Common myeloid progenitor, CD34-positive (primary cell): ENCODE measurements at regions of chr7 and their contacts with region 1.

Region 1: GRCh38 chr7:5477723-5478531 is 54.3 kb upstream of the TNRC18 start:
- DNase-seq: peak; percentile 72 to 85 (median 81)
- H3K4me3 ChIP-seq: peak overlapping the region; percentile 17 to 69 (median 61)
- H3K27ac ChIP-seq: peak overlapping the region; percentile 75 to 82
- H3K4me1 ChIP-seq: peaks cover 0 to 48% (median 41%) of the 10 kb centered on the region in 4 experiments
- H3K27me3 ChIP-seq: no peaks in the 10 kb centered on the region

Region 2: DNA sequence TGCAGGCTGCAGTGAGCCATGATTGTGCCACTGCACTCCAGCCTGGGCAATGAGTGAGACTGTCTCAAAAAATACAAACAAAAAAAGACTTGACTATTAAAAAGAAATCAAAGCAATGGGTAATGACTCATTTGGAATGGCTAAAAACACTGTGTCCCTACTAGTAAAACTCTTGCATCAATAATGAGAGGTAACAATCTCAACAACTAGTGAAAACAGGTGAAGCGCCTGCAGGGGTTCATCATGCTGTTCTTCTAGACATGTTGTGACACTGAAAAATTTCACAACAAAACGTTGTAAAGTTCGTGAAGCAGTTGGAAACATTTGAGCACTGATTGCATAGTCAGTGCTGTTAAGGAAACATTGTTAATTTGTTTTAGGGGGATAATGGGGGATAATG is 222.1 kb before region 1 on chr7:
- CTCF ChIA-PET with region 1: no interaction called
- POLR2A ChIA-PET with region 1: no interaction called
- DNase-seq: no peak
- H3K4me3 ChIP-seq: no peak overlapping the region
- H3K27ac ChIP-seq: no peak overlapping the region
- H3K4me1 ChIP-seq: no peaks in the 10 kb centered on the region
- H3K27me3 ChIP-seq: peaks cover 0 to 2% (median 0%) of the 10 kb centered on the region in 5 experiments

Region 3: GRCh38 chr7:5363729-5364128 is 114.2 kb before region 1 on chr7:
- CTCF ChIA-PET with region 1: interaction called, 11 read pairs
- POLR2A ChIA-PET with region 1: no interaction called
- DNase-seq: no peak
- H3K4me3 ChIP-seq: peak overlapping the region in 1 of 7 experiments; percentile 11
- H3K27ac ChIP-seq: peak overlapping the region in 1 of 2 experiments; percentile 34
- H3K4me1 ChIP-seq: peaks cover 0 to 27% (median 22%) of the 10 kb centered on the region in 4 experiments
- H3K27me3 ChIP-seq: no peaks in the 10 kb centered on the region

Region 4: DNA sequence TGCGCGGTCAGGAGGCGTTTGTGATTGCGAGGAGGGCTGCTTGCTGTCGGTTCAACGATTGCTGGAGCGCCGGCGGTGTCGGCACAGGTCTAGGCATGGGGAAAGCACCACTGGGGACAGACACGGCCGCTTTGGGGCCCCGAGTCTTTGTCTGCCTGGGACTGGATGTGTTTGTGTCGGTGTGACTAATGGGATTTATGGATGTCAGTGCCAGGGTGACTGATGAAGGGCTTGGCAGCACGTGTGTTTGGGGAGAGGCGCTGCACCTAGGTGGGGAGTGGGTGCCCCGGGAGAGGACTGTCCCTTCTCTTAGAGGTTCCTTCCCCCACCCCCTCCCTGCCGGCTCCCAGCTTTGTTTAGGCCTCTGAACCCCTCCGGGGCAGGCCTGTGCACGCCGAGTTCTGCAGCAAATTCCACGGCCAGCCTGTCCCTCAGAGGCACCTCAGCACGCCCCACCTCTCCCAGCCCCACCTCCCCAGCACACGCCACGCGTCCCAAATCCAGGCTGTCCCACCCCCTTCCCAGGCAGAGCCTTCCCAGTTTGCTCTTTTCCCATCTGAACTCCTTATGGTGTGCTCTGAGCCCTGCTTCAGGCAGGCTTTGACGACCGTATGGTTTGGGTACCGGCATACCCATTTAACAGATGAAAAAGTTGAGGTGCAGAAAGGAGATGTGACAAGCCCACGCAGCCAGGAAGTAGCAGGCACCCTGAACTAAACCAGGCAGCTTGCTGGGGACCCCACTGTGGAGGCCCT is 47.9 kb before region 1 on chr7:
- CTCF ChIA-PET with region 1: interaction called, 11 read pairs
- POLR2A ChIA-PET with region 1: interaction called, 5 read pairs
- DNase-seq: peak in 2 of 3 donors; percentile 73 to 80
- H3K4me3 ChIP-seq: peak overlapping the region; percentile 69 to 100 (median 93)
- H3K27ac ChIP-seq: peak overlapping the region; percentile 77 to 97
- H3K4me1 ChIP-seq: peaks cover 0 to 45% (median 39%) of the 10 kb centered on the region in 4 experiments
- H3K27me3 ChIP-seq: no peaks in the 10 kb centered on the region

Region 5: GRCh38 chr7:5450549-5451372 is 27.2 kb before region 1 on chr7:
- CTCF ChIA-PET with region 1: interaction called, 162 read pairs
- POLR2A ChIA-PET with region 1: interaction called, 3 read pairs
- DNase-seq: peak; percentile 71 to 86 (median 85)
- H3K4me3 ChIP-seq: peak overlapping the region in 2 of 7 experiments; percentile 28 to 37
- H3K27ac ChIP-seq: peak overlapping the region in 1 of 2 experiments; percentile 34
- H3K4me1 ChIP-seq: peaks cover 0 to 60% (median 45%) of the 10 kb centered on the region in 4 experiments
- H3K27me3 ChIP-seq: no peaks in the 10 kb centered on the region

Region 6: GRCh38 chr7:5462216-5462615 is 15.7 kb before region 1 on chr7:
- CTCF ChIA-PET with region 1: interaction called, 162 read pairs
- POLR2A ChIA-PET with region 1: interaction called, 13 read pairs
- DNase-seq: peak; percentile 90 to 94 (median 94)
- H3K4me3 ChIP-seq: peak overlapping the region in 4 of 7 experiments; percentile 1 to 41 (median 12)
- H3K27ac ChIP-seq: peak overlapping the region; percentile 90 to 93
- H3K4me1 ChIP-seq: peaks cover 10 to 61% (median 56%) of the 10 kb centered on the region in 4 experiments
- H3K27me3 ChIP-seq: no peaks in the 10 kb centered on the region

Region 7: DNA sequence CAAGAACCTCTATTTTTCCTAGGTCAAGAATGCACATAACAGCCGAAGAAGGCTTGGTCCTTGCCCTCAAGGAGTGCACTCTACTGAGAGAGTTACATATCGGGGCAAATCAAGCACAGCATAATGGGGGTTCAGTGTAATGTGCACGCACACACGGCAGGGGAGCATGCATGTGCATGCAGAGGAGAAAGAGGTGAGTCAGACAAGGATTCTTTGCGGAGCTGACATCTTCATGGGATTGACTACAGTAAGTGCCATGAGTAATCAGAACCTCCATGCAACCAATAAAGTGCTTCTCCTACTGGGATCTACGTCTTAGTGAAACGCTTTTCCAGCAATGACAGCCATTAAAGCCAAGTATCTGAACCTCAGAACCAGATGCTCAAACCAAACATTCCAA is 180.0 kb after region 1 on chr7:
- CTCF ChIA-PET with region 1: no interaction called
- POLR2A ChIA-PET with region 1: no interaction called
- DNase-seq: no peak
- H3K4me3 ChIP-seq: no peak overlapping the region
- H3K27ac ChIP-seq: no peak overlapping the region
- H3K4me1 ChIP-seq: peaks cover 3 to 21% (median 15%) of the 10 kb centered on the region in 4 experiments
- H3K27me3 ChIP-seq: no peaks in the 10 kb centered on the region